A549 (cell line): ENCODE measurements at regions of chr5 and their contacts with region 1.

Region 1: DNA sequence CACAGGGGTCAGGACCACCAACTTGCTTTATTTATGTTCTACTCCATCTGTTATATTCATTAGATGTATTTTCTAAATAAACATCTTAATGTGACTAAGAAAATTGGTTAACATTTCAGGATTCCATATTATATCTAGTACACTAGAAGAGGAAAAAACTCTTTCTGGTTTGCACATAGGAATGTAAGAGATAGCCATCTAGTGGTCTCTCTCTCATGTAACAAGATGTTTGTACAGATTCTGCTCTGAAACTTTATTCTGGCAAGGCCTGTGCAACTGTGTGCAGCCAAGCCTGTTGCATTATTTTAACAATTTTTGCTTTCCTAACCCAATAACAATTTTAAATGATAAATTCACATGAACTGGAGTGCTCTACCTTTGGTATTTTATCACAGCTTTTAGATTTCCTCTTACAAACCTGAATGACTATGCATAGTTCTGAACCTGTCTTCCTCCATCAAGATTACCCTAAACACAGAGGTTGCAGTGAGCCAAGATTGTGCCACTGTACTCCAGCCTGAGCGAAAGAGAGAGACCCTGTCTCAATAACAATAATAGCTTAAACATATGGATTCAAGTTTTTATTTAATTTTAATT is 148.1 kb downstream of the GIN1 start:
- DNase-seq: peak; percentile 15 to 42
- ATAC-seq: peak; percentile 84 to 89
- H3K4me3 ChIP-seq: no peak overlapping the region
- H3K27ac ChIP-seq: no peak overlapping the region
- H3K4me1 ChIP-seq: no peaks in the 10 kb centered on the region
- CTCF ChIP-seq: peak; percentile 68
- EP300 ChIP-seq: no peak
- POLR2A ChIP-seq: no peak
- RAD21 ChIP-seq: peak; percentile 67 to 77

Region 2: GRCh38 chr5:102782311-102782770 is 189.5 kb before region 1 on chr5:
- CTCF ChIA-PET with region 1: interaction called, 22 read pairs
- POLR2A ChIA-PET with region 1: no interaction called
- DNase-seq: no peak
- ATAC-seq: no peak
- H3K4me3 ChIP-seq: no peak overlapping the region
- H3K27ac ChIP-seq: no peak overlapping the region
- H3K4me1 ChIP-seq: no peaks in the 10 kb centered on the region
- CTCF ChIP-seq: no peak
- EP300 ChIP-seq: no peak
- POLR2A ChIP-seq: no peak
- RAD21 ChIP-seq: no peak

Region 3: GRCh38 chr5:102959055-102959454 is 12.7 kb before region 1 on chr5:
- CTCF ChIA-PET with region 1: interaction called, 15 read pairs
- POLR2A ChIA-PET with region 1: no interaction called
- DNase-seq: peak; percentile 15 to 59
- ATAC-seq: peak; percentile 92 to 98
- H3K4me3 ChIP-seq: no peak overlapping the region
- H3K27ac ChIP-seq: no peak overlapping the region; a peak in 1 of 6 replicates
- H3K4me1 ChIP-seq: peaks cover 19% of the 10 kb centered on the region
- CTCF ChIP-seq: no peak
- EP300 ChIP-seq: no peak
- POLR2A ChIP-seq: no peak
- RAD21 ChIP-seq: no peak